Adrenal gland (tissue), 19 donors: ENCODE measurements at regions of chr11 and their contacts with region 1.

Region 1: GRCh38 chr11:117316197-117316961 is at the start of gene BACE1:
- DNase-seq: peak; percentile 81 to 90 (median 84)
- H3K4me3 ChIP-seq: peak within 1 kb of the TSS in 3 of 4 donors; percentile 48 to 93 (median 80)
- H3K27ac ChIP-seq: peak within 1 kb of the TSS in 3 of 5 donors; percentile 14 to 36 (median 30)
- H3K4me1 ChIP-seq: peaks cover 19 to 41% of the 10 kb centered on the region in 2 donors
- H3K27me3 ChIP-seq: no peaks in the 10 kb centered on the region
- CTCF ChIP-seq: peak in 4 of 6 experiments; percentile 18 to 32 (median 26)
- POLR2A ChIP-seq: peak; percentile 46 to 47
- total RNA-seq, gene BACE1: 18.6 to 69.1 (median 43.1) TPM

Region 2: GRCh38 chr11:117199061-117199915 is 117.1 kb before region 1 on chr11 and contains the start of gene TAGLN:
- intact Hi-C with region 1: no loop called
- DNase-seq: peak in 5 of 7 donors; percentile 44 to 86 (median 61)
- H3K4me3 ChIP-seq: peak within 1 kb of the TSS in 1 of 4 donors; percentile 47
- H3K27ac ChIP-seq: peak within 1 kb of the TSS in 4 of 5 donors; percentile 48 to 92 (median 79)
- H3K4me1 ChIP-seq: peaks cover 4 to 9% of the 10 kb centered on the region in 2 donors
- H3K27me3 ChIP-seq: no peaks in the 10 kb centered on the region
- CTCF ChIP-seq: no peak
- POLR2A ChIP-seq: peak; percentile 22 to 47
- total RNA-seq, gene TAGLN: 37.1 to 1,290 (median 708) TPM

Region 3: DNA sequence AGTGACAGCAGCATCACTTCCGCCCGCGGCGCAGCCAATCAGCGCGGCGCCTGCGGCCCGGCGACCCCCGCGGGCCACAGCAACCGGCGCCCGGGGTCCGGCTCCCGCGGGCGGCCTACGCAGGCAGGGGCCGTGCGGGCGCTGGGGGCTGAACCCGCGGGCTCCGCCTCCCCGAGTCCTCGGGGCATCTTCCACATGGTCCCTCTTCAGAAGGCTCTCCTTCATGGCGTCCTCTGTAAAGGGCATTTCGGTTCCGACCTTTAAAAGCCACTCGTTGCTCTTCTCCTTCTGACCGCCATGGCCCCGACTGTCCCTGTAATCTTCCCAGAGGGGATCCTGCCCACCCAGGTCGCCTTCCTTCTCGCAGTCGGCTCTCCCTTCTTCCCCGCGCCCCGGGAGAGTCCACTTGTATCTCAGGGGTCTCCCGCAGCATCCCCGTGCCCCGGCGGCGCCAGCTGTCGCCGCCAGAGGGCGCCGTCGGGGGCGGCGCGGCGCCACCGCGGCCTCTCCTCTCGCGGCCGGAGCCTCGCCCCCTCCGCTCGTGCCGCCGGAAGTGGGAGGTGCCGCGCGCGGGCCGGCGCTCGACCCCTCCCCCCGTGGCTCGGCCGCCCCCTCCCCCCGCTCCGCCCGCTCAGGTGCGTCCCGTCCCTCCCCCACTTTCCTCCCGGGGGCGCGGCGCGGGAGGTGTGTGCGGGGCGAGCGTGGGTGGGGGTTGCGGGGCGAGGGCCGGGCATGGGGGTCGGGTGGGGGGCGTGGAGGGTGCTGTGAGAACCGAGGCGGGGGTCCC is 84.1 kb before region 1 on chr11 and contains the start of gene RNF214:
- intact Hi-C with region 1: loop called in 1 of 2 experiments (anchors 5 kb)
- DNase-seq: peak; percentile 63 to 85 (median 72)
- H3K4me3 ChIP-seq: peak within 1 kb of the TSS; percentile 77 to 98 (median 94)
- H3K27ac ChIP-seq: peak within 1 kb of the TSS; percentile 61 to 96 (median 91)
- H3K4me1 ChIP-seq: peaks cover 17 to 30% of the 10 kb centered on the region in 2 donors
- H3K27me3 ChIP-seq: no peaks in the 10 kb centered on the region
- CTCF ChIP-seq: peak; percentile 42 to 97 (median 87)
- POLR2A ChIP-seq: peak; percentile 55 to 56
- total RNA-seq, gene RNF214: 11.3 to 33.8 (median 21.3) TPM

Region 4: DNA sequence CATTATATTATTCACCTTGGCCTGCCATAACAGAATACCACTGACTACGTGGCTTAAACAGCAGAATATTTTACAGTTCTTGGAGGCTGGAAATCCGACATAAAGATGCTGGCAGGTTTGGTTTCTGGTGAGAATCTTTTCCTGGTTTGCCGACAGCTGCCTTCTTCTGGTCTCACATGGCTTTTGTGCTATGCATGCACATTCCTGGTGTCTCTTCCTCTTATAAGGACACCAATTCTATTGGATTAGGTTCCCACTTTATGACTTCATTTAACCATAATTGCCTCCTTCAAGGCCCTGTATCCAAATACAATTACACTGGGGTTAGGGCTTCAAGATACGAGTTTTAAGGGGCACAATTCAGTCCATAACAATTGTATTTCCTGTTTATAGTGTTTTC is 66.8 kb before region 1 on chr11:
- intact Hi-C with region 1: loop called in 1 of 2 experiments (anchors 10 kb)
- DNase-seq: no peak
- H3K4me3 ChIP-seq: no peak overlapping the region
- H3K27ac ChIP-seq: no peak overlapping the region
- H3K4me1 ChIP-seq: no peaks in the 10 kb centered on the region
- H3K27me3 ChIP-seq: no peaks in the 10 kb centered on the region
- CTCF ChIP-seq: no peak
- POLR2A ChIP-seq: no peak